ENCODE measurements at regions of chr1 and their contacts with region 1.

Region 1: GRCh38 chr1:112466078-112466660 is 42.6 kb upstream of the WNT2B start:
- DNase-seq: peak; percentile 85 to 88
- ATAC-seq: peak; percentile 97 to 98
- H3K4me3 ChIP-seq: peak overlapping the region; percentile 44 to 51 (median 50)
- H3K27ac ChIP-seq: peak overlapping the region; percentile 37 to 58 (median 50)
- H3K4me1 ChIP-seq: peaks cover 4 to 8% of the 10 kb centered on the region in 2 donors
- H3K27me3 ChIP-seq: no peaks in the 10 kb centered on the region
- CTCF ChIP-seq: peak; percentile 79 to 90 (median 87)
- POLR2A ChIP-seq: no peak

Region 2: DNA sequence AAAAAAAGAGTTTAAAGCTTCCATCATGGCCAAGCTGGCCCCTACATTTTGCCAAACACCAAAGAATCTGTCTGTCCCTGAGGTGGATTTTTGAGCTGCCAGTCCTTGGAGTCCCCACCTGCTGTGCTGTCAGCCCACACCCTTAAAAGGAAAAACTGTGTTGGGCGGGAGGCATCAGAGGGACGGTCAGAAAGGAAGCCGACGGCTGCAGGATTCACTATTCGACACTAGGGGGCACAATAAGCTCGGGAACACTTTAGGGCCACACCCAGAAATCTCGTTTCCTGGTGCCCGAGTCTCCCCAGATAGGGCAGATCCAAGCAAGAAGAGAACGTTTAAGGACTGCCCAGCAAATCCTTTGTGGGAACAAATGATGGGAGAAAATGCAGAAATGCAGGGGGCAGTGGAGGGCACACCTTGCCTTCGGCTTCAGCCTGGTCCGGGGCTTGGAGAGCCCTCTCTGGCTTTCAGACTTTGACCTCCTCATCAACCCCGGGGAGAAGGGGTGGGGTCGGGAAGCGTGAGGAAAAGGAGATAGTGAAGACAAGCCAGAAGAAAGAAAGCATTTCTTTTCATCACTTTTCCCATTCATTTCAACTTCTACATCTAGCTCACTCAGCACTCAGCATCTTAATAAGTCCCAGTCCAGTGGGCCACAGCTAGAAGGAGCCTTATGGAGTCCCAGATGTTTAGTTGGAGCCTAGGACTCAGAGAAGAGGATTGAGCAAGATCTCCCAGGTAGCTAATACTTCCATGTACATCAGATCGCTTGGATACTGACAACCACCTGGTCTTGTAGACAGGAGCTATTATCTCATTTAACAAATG is 75.2 kb before region 1 on chr1:
- in situ Hi-C with region 1: loop called (anchors 5 kb)
- intact Hi-C with region 1: loop called (anchors 1 kb)
- DNase-seq: peak; percentile 70 to 84
- ATAC-seq: peak; percentile 92
- H3K4me3 ChIP-seq: peak overlapping the region; percentile 39 to 64 (median 49)
- H3K27ac ChIP-seq: peak overlapping the region; percentile 58 to 91 (median 80)
- H3K4me1 ChIP-seq: peaks cover 20% of the 10 kb centered on the region in 2 donors
- H3K27me3 ChIP-seq: no peaks in the 10 kb centered on the region
- CTCF ChIP-seq: peak; percentile 88 to 93 (median 91)
- POLR2A ChIP-seq: peak in 1 of 2 donors; percentile 22

Measured in gastrocnemius medialis (tissue), 4 donors.